K562 (cell line): ENCODE measurements at regions of chr1 and their contacts with region 1.

Region 1: GRCh38 chr1:24656046-24656445 is 12.9 kb downstream of the SRRM1 start:
- DNase-seq: peak in 2 of 4 experiments; percentile 44 to 49
- ATAC-seq: peak; percentile 64
- H3K4me3 ChIP-seq: no peak overlapping the region
- H3K27ac ChIP-seq: no peak overlapping the region
- H3K4me1 ChIP-seq: peaks cover 0 to 8% of the 10 kb centered on the region in 2 experiments; a peak in 2 of 5 replicates
- H3K27me3 ChIP-seq: no peaks in the 10 kb centered on the region
- CTCF ChIP-seq: no peak
- EP300 ChIP-seq: no peak
- POLR2A ChIP-seq: no peak
- RAD21 ChIP-seq: no peak

Region 2: DNA sequence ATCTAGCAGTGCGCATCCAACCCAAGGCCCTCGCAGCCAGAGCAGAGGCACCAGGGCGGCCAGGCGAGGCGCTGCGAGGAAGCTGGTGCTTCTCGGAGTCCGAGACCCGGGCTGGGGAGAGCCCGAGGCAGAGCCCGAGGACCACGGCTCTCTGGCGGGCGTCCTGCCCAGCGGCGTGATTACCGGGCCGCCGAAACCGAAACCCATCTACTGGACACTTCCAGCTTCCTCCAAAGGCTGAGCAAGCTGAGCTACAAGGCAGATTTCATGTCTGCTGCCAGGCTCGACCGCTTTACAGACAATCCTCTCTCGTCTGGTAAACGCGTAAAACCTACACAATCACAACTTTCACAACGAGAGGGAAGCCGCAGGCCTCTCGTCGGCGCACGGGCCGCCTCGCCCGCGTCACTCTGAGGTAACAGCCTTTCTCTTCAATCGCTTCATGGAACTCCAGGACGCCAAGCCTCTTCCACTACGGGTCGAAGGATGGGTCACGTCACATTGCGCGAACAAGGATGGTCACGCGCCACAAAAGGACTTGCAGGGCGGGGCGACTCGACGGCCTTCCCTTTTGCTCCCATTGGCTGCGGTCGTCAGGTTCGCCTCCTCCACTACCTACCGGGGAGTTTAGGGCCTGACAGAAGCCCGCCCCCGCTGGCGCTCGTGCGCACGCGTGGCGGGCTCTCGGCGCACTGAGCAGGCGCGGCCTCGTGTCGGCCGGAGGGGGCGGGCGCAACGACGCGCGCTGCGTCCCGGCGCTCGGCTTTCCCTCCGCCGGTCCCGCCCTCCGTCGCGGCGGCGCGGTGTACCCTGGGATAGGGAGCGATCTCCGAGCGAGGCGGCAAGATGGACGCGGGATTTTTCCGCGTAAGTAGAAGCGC is 13.3 kb before region 1 on chr1 and contains the start of gene SRRM1:
- CTCF ChIA-PET with region 1: no interaction called
- POLR2A ChIA-PET with region 1: interaction called, 10 read pairs
- in situ Hi-C with region 1: no loop called
- intact Hi-C with region 1: no loop called
- DNase-seq: peak; percentile 98 to 100 (median 98)
- ATAC-seq: peak; percentile 96
- H3K4me3 ChIP-seq: peak within 1 kb of the TSS; percentile 96
- H3K27ac ChIP-seq: peak within 1 kb of the TSS; percentile 94
- H3K4me1 ChIP-seq: peaks cover 19% of the 10 kb centered on the region in 2 experiments
- H3K27me3 ChIP-seq: peaks cover under 1 to 2% of the 10 kb centered on the region in 2 experiments; a peak in 1 of 5 replicates
- CTCF ChIP-seq: peak; percentile 12 to 49 (median 33); a peak in 3 of 6 replicates
- EP300 ChIP-seq: peak; percentile 53
- POLR2A ChIP-seq: peak; percentile 98
- RAD21 ChIP-seq: no peak; a peak in 1 of 4 replicates
- polyA plus RNA-seq, gene SRRM1: 115 to 268 TPM

Region 3: DNA sequence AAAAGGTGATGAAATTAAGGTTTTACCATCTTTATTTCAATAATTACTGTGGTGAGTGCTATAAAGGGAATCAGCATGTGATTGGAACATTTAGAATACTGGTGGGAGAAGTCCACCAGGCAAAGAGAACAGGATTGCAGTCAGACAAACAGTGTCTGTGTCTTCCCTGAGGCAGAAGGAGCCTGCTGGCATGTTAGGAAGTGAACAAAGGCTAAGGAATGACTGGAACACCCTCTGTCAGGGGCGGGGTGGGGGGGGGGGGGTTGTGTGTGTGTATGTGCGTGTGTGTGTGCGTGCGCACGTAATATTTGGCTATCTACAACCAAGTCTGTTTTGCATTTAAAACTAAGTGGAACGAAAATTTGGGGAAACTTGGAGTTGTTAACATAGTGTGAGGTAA is 17.3 kb after region 1 on chr1:
- CTCF ChIA-PET with region 1: no interaction called
- POLR2A ChIA-PET with region 1: interaction called, 10 read pairs
- in situ Hi-C with region 1: no loop called
- intact Hi-C with region 1: no loop called
- DNase-seq: no peak
- ATAC-seq: no peak
- H3K4me3 ChIP-seq: no peak overlapping the region
- H3K27ac ChIP-seq: no peak overlapping the region
- H3K4me1 ChIP-seq: no peaks in the 10 kb centered on the region
- H3K27me3 ChIP-seq: no peaks in the 10 kb centered on the region
- CTCF ChIP-seq: no peak
- EP300 ChIP-seq: no peak
- POLR2A ChIP-seq: no peak
- RAD21 ChIP-seq: no peak